Calu3 (cell line): ENCODE measurements at regions of chr20 and their contacts with region 1.

Region 1: GRCh38 chr20:10034717-10035571 is at the start of gene ANKEF1:
- DNase-seq: peak; percentile 91
- H3K4me3 Mint-ChIP-seq: peak within 1 kb of the TSS; percentile 81
- H3K27ac Mint-ChIP-seq: peak within 1 kb of the TSS; percentile 79
- H3K4me1 Mint-ChIP-seq: no peaks in the 10 kb centered on the region
- H3K27me3 Mint-ChIP-seq: no peaks in the 10 kb centered on the region
- CTCF ChIP-seq: no peak
- total RNA-seq, gene ANKEF1: 9.0 and 11.0 TPM in 2 replicates

Region 2: DNA sequence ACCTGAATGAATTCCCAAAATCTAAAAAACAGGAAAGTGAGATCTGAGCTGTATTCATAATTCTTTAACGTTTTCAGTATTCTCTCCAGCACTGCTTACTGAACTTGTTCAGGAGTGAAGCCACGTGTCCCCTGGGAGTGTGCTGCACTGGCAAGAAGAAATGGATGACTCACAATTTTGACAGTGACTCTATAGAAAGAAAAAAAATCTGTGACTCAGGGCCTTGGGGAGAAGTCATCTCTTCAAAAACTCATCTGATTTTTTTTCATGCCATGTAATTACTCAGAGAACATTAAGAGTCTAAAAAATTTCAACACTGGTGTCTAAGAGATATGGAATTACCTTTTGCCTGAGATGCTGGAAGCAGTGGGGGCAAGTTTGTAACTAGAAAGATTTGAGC is 39.6 kb after region 1 on chr20:
- CTCF ChIA-PET with region 1: interaction called, 3 read pairs
- intact Hi-C with region 1: loop called (anchors 5 kb)
- DNase-seq: peak; percentile 28
- H3K4me3 Mint-ChIP-seq: no peak overlapping the region
- H3K27ac Mint-ChIP-seq: peak overlapping the region; percentile 69
- H3K4me1 Mint-ChIP-seq: peaks cover 43% of the 10 kb centered on the region
- H3K27me3 Mint-ChIP-seq: no peaks in the 10 kb centered on the region
- CTCF ChIP-seq: no peak